Ovary (tissue), 10 donors: ENCODE measurements at regions of chr11 and their contacts with region 1.

Region 1: GRCh38 chr11:118791111-118791965 is at the start of gene DDX6:
- DNase-seq: peak; percentile 89 to 94 (median 92)
- H3K4me3 ChIP-seq: peak within 1 kb of the TSS; percentile 71
- H3K27ac ChIP-seq: peak within 1 kb of the TSS; percentile 99
- H3K4me1 ChIP-seq: peaks cover 17% of the 10 kb centered on the region
- H3K27me3 ChIP-seq: no peaks in the 10 kb centered on the region
- CTCF ChIP-seq: peak; percentile 32 to 65 (median 63)
- EP300 ChIP-seq: no peak
- POLR2A ChIP-seq: peak; percentile 86
- total RNA-seq, gene DDX6: 81.6 to 212 (median 158) TPM

Region 2: DNA sequence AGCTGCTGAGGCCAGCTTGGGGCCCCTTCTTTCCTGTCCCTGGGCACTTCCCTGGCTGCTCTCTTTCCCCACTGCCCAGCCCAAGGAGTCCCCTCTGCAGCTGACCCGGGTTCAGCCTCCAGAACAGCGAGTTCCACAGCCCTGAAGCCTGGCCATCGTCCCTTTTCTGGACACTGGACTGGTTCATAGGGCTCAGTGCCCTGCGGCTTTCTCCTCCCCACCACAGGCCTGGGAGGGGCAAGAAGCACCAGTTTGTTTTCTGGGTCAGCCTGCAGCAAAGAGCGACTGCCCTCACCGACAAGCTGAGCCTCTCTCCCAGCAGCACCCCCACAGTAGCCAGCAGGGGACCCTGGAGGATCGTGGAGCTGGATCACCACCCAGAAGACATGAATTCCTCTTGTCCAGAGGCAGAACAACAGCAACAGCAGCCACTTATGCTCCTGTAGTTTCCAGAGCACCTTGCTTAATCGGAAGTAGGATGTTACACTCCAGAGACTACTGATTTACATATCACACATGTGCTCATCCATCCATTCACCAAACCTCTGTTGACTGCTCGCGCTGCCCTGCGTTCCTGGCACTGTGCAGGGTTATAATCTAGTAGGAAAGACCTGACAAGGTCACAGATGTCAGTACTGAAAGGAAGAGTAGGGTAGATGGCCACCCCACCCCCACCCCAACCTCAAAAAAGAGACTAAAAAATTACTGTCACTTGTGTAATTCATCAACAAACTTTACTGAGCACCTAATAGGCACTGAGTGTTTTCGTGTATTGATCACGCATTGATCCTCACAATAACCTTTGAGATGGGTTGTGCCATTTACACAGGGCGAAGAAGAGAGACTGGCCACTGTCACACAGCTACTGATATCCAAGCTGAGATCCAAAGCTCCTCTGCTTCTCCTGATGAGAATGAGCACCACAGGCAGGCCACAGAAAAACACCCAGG is 79.3 kb after region 1 on chr11:
- intact Hi-C with region 1: loop called in 1 of 4 experiments (anchors 1 kb)
- DNase-seq: peak in 4 of 5 donors; percentile 50 to 76 (median 66)
- H3K4me3 ChIP-seq: no peak overlapping the region
- H3K27ac ChIP-seq: peak overlapping the region; percentile 32 to 87
- H3K4me1 ChIP-seq: peaks cover 10% of the 10 kb centered on the region
- H3K27me3 ChIP-seq: no peaks in the 10 kb centered on the region
- CTCF ChIP-seq: no peak
- EP300 ChIP-seq: peak; percentile 0
- POLR2A ChIP-seq: no peak

Region 3: GRCh38 chr11:118928108-118928870 is 137.0 kb after region 1 on chr11:
- intact Hi-C with region 1: loop called in 3 of 4 experiments (anchors 2 to 5 kb)
- DNase-seq: peak; percentile 92 to 95 (median 95)
- H3K4me3 ChIP-seq: peak overlapping the region; percentile 98
- H3K27ac ChIP-seq: peak overlapping the region; percentile 76 to 90
- H3K4me1 ChIP-seq: peaks cover 3% of the 10 kb centered on the region
- H3K27me3 ChIP-seq: no peaks in the 10 kb centered on the region
- CTCF ChIP-seq: peak; percentile 88 to 98 (median 98)
- EP300 ChIP-seq: no peak
- POLR2A ChIP-seq: peak; percentile 35

Region 4: GRCh38 chr11:119306373-119306890 is 515.1 kb after region 1 on chr11:
- intact Hi-C with region 1: no loop called
- DNase-seq: peak; percentile 39 to 61 (median 55)
- H3K4me3 ChIP-seq: no peak overlapping the region
- H3K27ac ChIP-seq: peak overlapping the region; percentile 9 to 72
- H3K4me1 ChIP-seq: peaks cover 12% of the 10 kb centered on the region
- H3K27me3 ChIP-seq: no peaks in the 10 kb centered on the region
- CTCF ChIP-seq: no peak
- EP300 ChIP-seq: no peak
- POLR2A ChIP-seq: no peak